Activated naive CD4-positive, alpha-beta T cell treated with anti-CD3 and anti-CD28 coated beads, Interleukin-2, amount 10 ng/mL, durations not matched to agents 7 days and 5 days (primary cell): ENCODE measurements at regions of chr15 and their contacts with region 1.

Region 1: DNA sequence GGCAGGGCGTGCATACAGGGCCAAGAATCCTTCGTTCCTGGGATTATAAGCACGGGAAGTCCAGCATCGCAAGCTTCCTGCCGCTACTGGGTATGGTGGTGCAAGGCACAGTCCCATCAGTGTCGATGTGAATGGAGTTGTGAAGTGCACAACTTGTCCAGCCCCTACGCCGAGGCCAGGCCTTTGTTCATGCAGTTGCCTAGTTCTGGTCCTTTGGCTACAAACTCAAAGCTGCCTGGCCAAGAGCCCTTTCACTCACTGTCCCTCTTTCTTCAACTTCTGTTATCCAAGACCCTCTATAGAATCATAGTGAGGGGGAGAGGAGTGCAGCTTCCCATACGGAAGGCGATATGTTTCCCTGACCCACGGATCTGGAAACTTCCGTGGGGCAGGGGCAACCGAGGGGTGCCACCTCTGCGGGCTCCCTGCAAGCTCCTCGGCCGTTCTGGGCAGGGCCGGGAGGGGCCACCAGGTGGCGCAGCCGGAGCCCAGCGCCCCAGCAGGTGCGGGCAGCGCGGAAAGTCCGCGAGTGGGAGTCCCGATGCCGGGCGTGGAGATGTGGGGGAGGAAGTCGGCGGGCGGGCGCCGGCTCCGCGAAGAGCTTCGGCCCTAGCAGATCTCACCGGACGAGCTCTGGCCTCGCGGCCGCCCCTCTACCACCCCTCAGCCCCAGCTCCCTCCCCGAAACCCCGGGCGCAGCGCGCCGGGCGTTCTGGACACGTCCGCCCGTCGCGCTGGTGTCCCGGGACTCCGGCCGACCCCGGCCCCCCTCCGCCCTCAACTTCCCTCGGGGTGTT is 693 bp downstream of the RASGRP1 start:
- DNase-seq: peak; percentile 90
- H3K4me3 Mint-ChIP-seq: peak overlapping the region; percentile 77
- H3K27ac Mint-ChIP-seq: peak overlapping the region; percentile 96
- H3K4me1 Mint-ChIP-seq: peaks cover 62% of the 10 kb centered on the region
- H3K27me3 Mint-ChIP-seq: no peaks in the 10 kb centered on the region

Region 2: GRCh38 chr15:38589502-38589901 is 25.6 kb after region 1 on chr15:
- CTCF ChIA-PET with region 1: interaction called, 17 read pairs
- DNase-seq: no peak
- H3K4me3 Mint-ChIP-seq: no peak overlapping the region
- H3K27ac Mint-ChIP-seq: no peak overlapping the region
- H3K4me1 Mint-ChIP-seq: peaks cover 37% of the 10 kb centered on the region
- H3K27me3 Mint-ChIP-seq: peaks cover 12% of the 10 kb centered on the region

Region 3: GRCh38 chr15:38647683-38648082 is 83.8 kb after region 1 on chr15:
- CTCF ChIA-PET with region 1: interaction called, 53 read pairs
- DNase-seq: no peak
- H3K4me3 Mint-ChIP-seq: no peak overlapping the region
- H3K27ac Mint-ChIP-seq: no peak overlapping the region
- H3K4me1 Mint-ChIP-seq: peaks cover 81% of the 10 kb centered on the region
- H3K27me3 Mint-ChIP-seq: no peaks in the 10 kb centered on the region

Region 4: DNA sequence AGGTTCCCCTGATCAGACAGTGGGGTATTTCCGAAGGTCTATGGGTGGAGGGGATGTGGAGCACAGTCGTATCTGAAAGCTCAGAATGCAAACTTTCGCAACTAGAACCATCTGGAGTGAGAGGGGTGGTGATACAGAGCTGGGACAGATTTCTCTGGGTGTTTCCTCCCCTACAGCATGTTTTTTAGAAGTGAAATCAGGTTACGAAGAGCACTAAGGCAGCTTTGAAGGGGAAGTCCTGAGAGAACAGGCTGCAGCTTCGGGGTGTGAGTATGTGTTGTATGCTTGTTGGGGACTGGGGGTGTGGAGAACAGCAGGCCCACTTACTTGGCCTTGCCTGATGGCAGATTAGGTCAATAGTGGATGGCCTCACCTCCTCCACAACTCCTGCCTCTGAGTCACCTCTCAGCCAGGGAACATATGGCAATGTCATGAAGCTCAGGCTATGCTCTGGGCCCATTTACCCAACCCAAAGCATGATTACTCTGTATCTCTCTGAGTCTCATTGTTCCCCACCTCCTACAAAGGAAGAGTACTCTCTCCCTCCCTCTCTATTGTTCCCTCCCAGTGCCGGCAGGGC is 107.8 kb after region 1 on chr15:
- CTCF ChIA-PET with region 1: interaction called, 50 read pairs
- DNase-seq: peak; percentile 61
- H3K4me3 Mint-ChIP-seq: peak overlapping the region; percentile 53
- H3K27ac Mint-ChIP-seq: peak overlapping the region; percentile 98
- H3K4me1 Mint-ChIP-seq: peaks cover 80% of the 10 kb centered on the region
- H3K27me3 Mint-ChIP-seq: no peaks in the 10 kb centered on the region

Region 5: GRCh38 chr15:38699633-38700230 is 135.8 kb after region 1 on chr15:
- CTCF ChIA-PET with region 1: interaction called, 64 read pairs
- DNase-seq: peak; percentile 86
- H3K4me3 Mint-ChIP-seq: no peak overlapping the region
- H3K27ac Mint-ChIP-seq: peak overlapping the region; percentile 64
- H3K4me1 Mint-ChIP-seq: peaks cover 66% of the 10 kb centered on the region
- H3K27me3 Mint-ChIP-seq: peaks cover 9% of the 10 kb centered on the region